WTC11 (cell line): ENCODE measurements at regions of chr14 and their contacts with region 1.

Region 1: DNA sequence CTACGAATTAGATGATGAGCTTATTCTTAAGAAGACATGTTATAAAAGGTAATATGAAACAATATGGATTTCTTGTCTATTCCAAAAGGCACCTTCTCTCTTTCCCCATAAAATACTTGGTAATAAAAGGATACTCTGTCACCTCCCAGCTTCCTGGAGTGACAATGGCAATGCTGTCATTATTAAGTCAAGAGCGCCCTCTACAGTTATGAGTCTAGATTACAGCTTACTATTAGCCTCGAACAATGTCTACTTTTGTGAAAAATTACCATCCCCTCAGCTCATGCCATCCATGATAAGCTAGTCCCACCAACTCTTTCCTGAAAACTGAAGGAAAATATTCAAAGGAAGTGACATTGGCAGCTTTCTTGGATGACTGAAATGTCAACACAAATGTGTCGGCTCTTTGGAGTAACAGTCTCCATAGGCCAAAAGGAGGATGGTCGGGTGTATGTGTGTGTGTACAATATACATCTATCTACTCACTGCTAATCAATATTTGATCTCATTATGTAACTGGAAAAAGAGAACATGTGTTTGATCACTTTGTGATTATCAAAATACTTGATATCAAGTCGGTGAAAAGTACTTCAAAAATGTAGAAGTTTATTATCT is 48.7 kb upstream of the CDKN3 start:
- DNase-seq: no peak
- ATAC-seq: peak; percentile 58
- H3K4me3 Mint-ChIP-seq: no peak overlapping the region
- H3K27ac Mint-ChIP-seq: no peak overlapping the region
- H3K4me1 Mint-ChIP-seq: peaks cover 56% of the 10 kb centered on the region
- H3K27me3 Mint-ChIP-seq: no peaks in the 10 kb centered on the region; the same call in 1 of the 2 replicates
- CTCF ChIP-seq: peak; percentile 85

Region 2: GRCh38 chr14:53295985-53296582 is 1052.0 kb before region 1 on chr14:
- CTCF ChIA-PET with region 1: interaction called, 12 read pairs
- POLR2A ChIA-PET with region 1: no interaction called
- DNase-seq: no peak
- ATAC-seq: no peak
- H3K4me3 Mint-ChIP-seq: no peak overlapping the region
- H3K27ac Mint-ChIP-seq: no peak overlapping the region
- H3K4me1 Mint-ChIP-seq: 0 out of 2 replicates have a peak, but pooled peaks cover 4% of the 10 kb centered on the region
- H3K27me3 Mint-ChIP-seq: no peaks in the 10 kb centered on the region
- CTCF ChIP-seq: peak; percentile 68

Region 3: DNA sequence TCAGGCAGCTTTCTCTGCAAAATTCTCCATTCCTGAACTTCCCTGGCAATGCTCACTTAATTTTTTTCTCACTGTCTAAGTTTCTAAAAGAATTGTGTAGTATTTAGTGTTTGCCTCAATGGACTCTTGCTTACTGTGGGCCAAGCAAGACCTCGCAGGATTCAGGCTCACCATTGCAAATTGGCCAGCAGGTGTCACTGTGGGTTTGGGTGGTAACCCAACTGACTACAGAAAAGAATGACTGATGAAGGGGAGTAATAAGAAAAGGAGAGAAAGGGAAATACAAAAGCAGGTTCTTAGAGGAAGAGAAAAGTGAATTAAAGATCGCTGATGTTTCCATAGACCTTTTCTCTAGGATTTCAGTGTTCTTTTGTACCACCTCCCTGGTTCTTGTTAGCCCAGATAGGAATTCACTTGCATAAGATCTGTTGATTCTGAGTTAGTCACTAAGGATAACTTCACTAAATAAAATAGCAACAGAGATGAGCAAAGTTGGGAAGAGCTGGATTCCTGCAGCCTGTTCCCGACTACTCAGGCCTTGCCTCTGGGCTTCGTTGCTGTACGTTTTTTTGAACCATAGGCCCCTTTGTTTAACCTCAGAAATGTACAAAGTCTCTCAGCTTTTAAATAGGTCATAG is 808.5 kb before region 1 on chr14:
- CTCF ChIA-PET with region 1: interaction called, 36 read pairs
- POLR2A ChIA-PET with region 1: no interaction called
- DNase-seq: peak; percentile 90
- ATAC-seq: peak; percentile 97
- H3K4me3 Mint-ChIP-seq: no peak overlapping the region
- H3K27ac Mint-ChIP-seq: no peak overlapping the region
- H3K4me1 Mint-ChIP-seq: peaks cover 8% of the 10 kb centered on the region; the same call in 1 of the 2 replicates
- H3K27me3 Mint-ChIP-seq: no peaks in the 10 kb centered on the region
- CTCF ChIP-seq: peak; percentile 52; the same call in 1 of the 2 replicates

Region 4: GRCh38 chr14:54186821-54187763 is 161.0 kb before region 1 on chr14:
- CTCF ChIA-PET with region 1: interaction called, 24 read pairs
- POLR2A ChIA-PET with region 1: interaction called, 3 read pairs
- DNase-seq: no peak
- ATAC-seq: peak; percentile 47; the same call in 1 of the 2 replicates
- H3K4me3 Mint-ChIP-seq: no peak overlapping the region
- H3K27ac Mint-ChIP-seq: no peak overlapping the region
- H3K4me1 Mint-ChIP-seq: peaks cover 16% of the 10 kb centered on the region
- H3K27me3 Mint-ChIP-seq: peaks cover 9% of the 10 kb centered on the region
- CTCF ChIP-seq: no peak

Region 5: GRCh38 chr14:54291491-54292191 is 56.5 kb before region 1 on chr14:
- CTCF ChIA-PET with region 1: interaction called, 10 read pairs
- POLR2A ChIA-PET with region 1: no interaction called
- DNase-seq: no peak
- ATAC-seq: peak; percentile 93
- H3K4me3 Mint-ChIP-seq: no peak overlapping the region
- H3K27ac Mint-ChIP-seq: peak overlapping the region; percentile 36; the same call in 1 of the 2 replicates
- H3K4me1 Mint-ChIP-seq: peaks cover 18% of the 10 kb centered on the region
- H3K27me3 Mint-ChIP-seq: no peaks in the 10 kb centered on the region; the same call in 1 of the 2 replicates
- CTCF ChIP-seq: no peak

Region 6: GRCh38 chr14:54312140-54312801 is 35.8 kb before region 1 on chr14:
- CTCF ChIA-PET with region 1: no interaction called
- POLR2A ChIA-PET with region 1: no interaction called
- DNase-seq: no peak
- ATAC-seq: peak; percentile 76
- H3K4me3 Mint-ChIP-seq: no peak overlapping the region
- H3K27ac Mint-ChIP-seq: no peak overlapping the region
- H3K4me1 Mint-ChIP-seq: peaks cover 6% of the 10 kb centered on the region; the same call in 1 of the 2 replicates
- H3K27me3 Mint-ChIP-seq: no peaks in the 10 kb centered on the region; the same call in 1 of the 2 replicates
- CTCF ChIP-seq: no peak

Region 7: GRCh38 chr14:54396493-54397335 is 48.6 kb after region 1 on chr14 and contains the start of gene CDKN3:
- CTCF ChIA-PET with region 1: interaction called, 42 read pairs
- POLR2A ChIA-PET with region 1: no interaction called
- DNase-seq: peak; percentile 97
- ATAC-seq: peak; percentile 97
- H3K4me3 Mint-ChIP-seq: peak within 1 kb of the TSS; percentile 81
- H3K27ac Mint-ChIP-seq: no peak within 1 kb of the TSS
- H3K4me1 Mint-ChIP-seq: peaks cover 31% of the 10 kb centered on the region
- H3K27me3 Mint-ChIP-seq: peaks cover 11% of the 10 kb centered on the region; the same call in 1 of the 2 replicates
- CTCF ChIP-seq: 0 out of 2 replicates have a peak, but pooled peaks have one; percentile 28
- total RNA-seq, gene CDKN3: 55.4 to 62.0 TPM (median 57.0 TPM) in 3 replicates

Region 8: DNA sequence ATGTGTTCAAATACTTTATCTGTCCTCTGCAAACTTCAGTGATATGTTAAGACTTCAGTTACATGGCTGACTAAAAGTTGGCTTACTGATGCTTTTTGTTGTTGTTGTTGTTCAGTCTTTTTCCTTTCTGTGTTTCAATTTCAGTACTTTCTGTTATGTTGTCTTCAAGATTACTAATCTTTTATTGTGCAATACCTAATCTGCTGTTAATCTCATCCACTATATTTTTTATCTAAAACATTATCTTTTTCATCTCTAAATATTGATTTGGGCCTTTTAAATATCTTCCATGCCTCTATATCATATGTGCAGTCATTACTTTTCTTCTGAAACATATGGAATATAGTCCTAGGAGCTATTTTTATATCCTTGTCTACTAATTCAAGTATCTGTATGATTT is 168.6 kb after region 1 on chr14:
- CTCF ChIA-PET with region 1: no interaction called
- POLR2A ChIA-PET with region 1: no interaction called
- DNase-seq: no peak
- ATAC-seq: no peak
- H3K4me3 Mint-ChIP-seq: no peak overlapping the region
- H3K27ac Mint-ChIP-seq: no peak overlapping the region
- H3K4me1 Mint-ChIP-seq: peaks cover 1% of the 10 kb centered on the region; the same call in 1 of the 2 replicates
- H3K27me3 Mint-ChIP-seq: no peaks in the 10 kb centered on the region
- CTCF ChIP-seq: no peak